ENCODE measurements at regions of chr5 and their contacts with region 1.

Region 1: DNA sequence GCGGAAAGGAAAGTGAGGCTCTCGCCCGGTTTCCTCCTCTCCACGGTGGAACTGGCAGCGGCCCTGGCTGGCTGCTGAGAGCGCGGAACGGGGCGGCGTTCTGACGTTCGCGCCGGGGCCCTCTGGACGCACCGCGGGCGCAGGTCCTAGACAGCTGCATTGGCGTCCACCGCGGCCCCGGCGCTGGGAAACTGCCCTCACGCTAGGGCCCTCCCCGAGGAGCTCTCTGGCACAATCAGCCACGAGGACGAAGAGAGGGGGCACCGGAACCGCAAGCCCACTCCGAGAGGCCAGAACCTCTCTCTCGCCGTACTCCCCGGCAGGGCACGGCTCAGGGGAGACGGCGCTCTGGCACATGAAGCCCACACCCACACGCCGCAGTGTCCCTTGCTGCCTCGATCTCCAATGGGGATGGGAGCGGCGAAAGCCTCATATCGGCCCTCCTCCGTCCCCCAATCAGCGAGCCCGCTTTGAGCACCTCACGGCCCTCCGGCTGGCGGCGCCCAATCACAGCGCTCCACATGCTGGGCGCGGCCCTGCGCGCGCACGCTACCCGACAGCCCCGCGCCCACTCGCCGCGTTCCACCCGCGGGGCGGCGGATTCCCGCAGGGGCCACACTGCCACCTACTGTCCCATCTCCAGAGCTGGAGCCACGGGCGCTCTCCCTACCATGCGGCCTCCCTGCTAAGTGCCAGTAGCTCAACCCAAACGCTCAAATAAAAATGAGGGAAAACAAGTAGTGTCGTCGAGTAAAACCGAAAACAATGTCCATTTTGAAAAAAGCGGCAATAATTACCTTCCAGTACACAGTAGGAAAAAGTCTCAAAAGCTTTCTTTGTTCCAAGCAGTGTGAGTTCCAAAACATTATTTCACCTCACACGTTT is 11.8 kb downstream of the MRPS27 start:
- DNase-seq: peak; percentile 95
- H3K4me3 Mint-ChIP-seq: peak overlapping the region; percentile 90
- H3K27ac Mint-ChIP-seq: peak overlapping the region; percentile 99
- H3K4me1 Mint-ChIP-seq: peaks cover 37% of the 10 kb centered on the region
- H3K27me3 Mint-ChIP-seq: peaks cover 2% of the 10 kb centered on the region

Region 2: GRCh38 chr5:71586941-71587765 is 721.1 kb before region 1 on chr5 and contains the start of gene MCCC2:
- intact Hi-C with region 1: loop called (anchors 1 kb)
- DNase-seq: peak; percentile 96
- H3K4me3 Mint-ChIP-seq: peak within 1 kb of the TSS; percentile 95
- H3K27ac Mint-ChIP-seq: peak within 1 kb of the TSS; percentile 99
- H3K4me1 Mint-ChIP-seq: peaks cover 36% of the 10 kb centered on the region
- H3K27me3 Mint-ChIP-seq: no peaks in the 10 kb centered on the region
- total RNA-seq, gene MCCC2: 49.8 and 53.8 TPM in 2 replicates

Region 3: DNA sequence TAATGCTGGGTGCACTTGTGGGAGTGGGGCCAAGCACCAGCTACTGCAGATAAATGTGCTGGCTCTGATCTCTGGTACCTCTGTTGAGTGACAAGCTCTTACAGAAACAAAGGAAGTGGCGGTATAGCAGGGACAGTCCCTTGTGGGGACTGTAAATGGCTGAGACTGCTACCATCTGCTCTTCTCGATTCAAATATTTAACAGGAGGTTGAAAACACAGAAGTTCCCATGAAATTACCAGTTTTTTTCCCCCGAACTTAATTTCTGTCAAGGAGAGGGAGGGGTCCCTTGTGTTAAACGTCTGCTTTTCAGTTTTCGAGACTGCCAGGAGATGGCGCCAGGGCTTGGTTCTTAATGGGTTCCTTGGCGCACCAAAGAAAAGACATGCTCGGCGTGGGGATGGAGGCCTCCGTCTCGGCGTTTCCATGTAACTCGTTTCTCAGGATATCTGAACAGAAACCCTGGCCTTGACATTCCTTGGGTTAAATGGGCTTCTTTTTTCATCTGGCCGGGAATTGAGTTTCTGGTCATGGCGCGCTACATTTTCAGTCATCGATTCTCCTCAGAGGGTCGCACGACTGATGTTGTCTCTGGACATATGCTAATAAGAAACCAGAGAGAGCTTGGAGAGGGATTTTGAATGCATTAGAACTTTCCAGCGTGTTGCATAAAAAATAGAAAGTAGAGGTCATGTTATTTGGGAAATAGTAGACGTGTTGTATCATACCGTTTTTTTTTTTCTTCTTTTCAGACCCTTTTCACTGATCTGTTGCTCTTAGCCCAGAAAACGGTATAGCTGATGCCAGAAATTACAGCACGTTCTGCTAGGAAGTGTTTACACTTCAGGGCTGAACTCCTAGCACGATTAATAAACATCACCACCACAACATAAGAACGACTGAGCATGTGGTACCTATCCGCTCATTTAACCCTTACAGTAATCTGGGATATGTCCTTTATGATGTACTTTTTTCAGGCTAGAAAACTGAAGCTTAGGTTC is 525.1 kb before region 1 on chr5:
- intact Hi-C with region 1: loop called (anchors 1 kb)
- DNase-seq: peak; percentile 3
- H3K4me3 Mint-ChIP-seq: peak overlapping the region; percentile 50
- H3K27ac Mint-ChIP-seq: peak overlapping the region; percentile 3
- H3K4me1 Mint-ChIP-seq: peaks cover 25% of the 10 kb centered on the region
- H3K27me3 Mint-ChIP-seq: peaks cover 9% of the 10 kb centered on the region

Region 4: GRCh38 chr5:72234265-72234700 is 73.9 kb before region 1 on chr5:
- intact Hi-C with region 1: loop called (anchors 1 kb)
- DNase-seq: peak; percentile 12
- H3K4me3 Mint-ChIP-seq: peak overlapping the region; percentile 32
- H3K27ac Mint-ChIP-seq: no peak overlapping the region
- H3K4me1 Mint-ChIP-seq: peaks cover 29% of the 10 kb centered on the region
- H3K27me3 Mint-ChIP-seq: peaks cover 15% of the 10 kb centered on the region

Region 5: GRCh38 chr5:72244862-72245371 is 63.3 kb before region 1 on chr5:
- intact Hi-C with region 1: no loop called
- DNase-seq: no peak
- H3K4me3 Mint-ChIP-seq: no peak overlapping the region
- H3K27ac Mint-ChIP-seq: no peak overlapping the region
- H3K4me1 Mint-ChIP-seq: peaks cover 11% of the 10 kb centered on the region
- H3K27me3 Mint-ChIP-seq: peaks cover 3% of the 10 kb centered on the region